ENCODE measurements at regions of chr16 and their contacts with region 1.

Region 1: DNA sequence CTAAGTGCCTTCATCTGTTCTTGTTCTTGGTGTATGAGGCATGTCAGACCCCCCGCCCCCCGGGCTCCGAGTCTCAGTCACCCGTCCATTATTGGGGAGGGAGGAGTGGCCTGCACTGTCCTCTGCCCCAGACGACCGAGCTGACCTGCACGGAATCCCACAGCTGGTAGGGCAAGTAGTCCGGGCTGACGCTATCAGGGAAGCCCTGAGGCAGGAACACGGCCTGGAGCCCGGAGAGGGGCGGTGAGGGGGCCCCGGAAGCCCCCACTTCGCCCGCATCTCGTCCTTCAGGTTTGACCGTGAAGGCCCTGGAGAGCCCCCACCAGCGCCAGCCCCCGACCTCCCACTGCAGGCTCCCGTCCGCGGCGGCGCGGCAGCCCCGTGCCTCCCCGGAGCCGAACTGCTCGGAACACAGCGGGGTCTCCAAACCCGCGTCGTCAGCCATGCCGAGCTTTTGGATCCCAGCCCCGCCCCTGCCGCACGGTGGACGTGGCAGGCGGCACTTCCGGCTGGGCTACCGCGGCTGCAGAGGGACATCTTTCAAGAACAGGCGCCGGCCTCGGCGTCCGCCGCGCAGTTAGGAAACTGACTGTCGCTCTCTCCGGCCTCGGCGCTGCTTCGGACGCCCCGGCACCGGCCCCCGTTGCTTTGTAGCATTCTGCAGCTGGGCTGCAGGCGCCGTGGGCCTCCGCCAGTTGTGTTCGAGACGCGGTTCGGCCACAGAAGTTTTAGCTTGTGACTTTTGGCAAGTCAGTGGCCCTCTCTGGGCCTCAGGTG is at the start of gene RUSF1:
- DNase-seq: peak; percentile 63 to 84 (median 77)
- ATAC-seq: peak; percentile 93
- H3K4me3 ChIP-seq: peak within 1 kb of the TSS; percentile 77
- H3K4me3 Mint-ChIP-seq: peak within 1 kb of the TSS; percentile 83 to 98 (median 92)
- H3K27ac ChIP-seq: peak within 1 kb of the TSS; percentile 93
- H3K27ac Mint-ChIP-seq: peak within 1 kb of the TSS; percentile 93 to 98 (median 97)
- H3K4me1 ChIP-seq: peaks cover 27% of the 10 kb centered on the region in 2 donors
- H3K4me1 Mint-ChIP-seq: peaks cover 30 to 66% (median 53%) of the 10 kb centered on the region in 7 donors
- H3K27me3 ChIP-seq: no peaks in the 10 kb centered on the region
- H3K27me3 Mint-ChIP-seq: no peaks in the 10 kb centered on the region
- total RNA-seq, gene RUSF1: 47.3 to 118 (median 89.5) TPM

Region 2: DNA sequence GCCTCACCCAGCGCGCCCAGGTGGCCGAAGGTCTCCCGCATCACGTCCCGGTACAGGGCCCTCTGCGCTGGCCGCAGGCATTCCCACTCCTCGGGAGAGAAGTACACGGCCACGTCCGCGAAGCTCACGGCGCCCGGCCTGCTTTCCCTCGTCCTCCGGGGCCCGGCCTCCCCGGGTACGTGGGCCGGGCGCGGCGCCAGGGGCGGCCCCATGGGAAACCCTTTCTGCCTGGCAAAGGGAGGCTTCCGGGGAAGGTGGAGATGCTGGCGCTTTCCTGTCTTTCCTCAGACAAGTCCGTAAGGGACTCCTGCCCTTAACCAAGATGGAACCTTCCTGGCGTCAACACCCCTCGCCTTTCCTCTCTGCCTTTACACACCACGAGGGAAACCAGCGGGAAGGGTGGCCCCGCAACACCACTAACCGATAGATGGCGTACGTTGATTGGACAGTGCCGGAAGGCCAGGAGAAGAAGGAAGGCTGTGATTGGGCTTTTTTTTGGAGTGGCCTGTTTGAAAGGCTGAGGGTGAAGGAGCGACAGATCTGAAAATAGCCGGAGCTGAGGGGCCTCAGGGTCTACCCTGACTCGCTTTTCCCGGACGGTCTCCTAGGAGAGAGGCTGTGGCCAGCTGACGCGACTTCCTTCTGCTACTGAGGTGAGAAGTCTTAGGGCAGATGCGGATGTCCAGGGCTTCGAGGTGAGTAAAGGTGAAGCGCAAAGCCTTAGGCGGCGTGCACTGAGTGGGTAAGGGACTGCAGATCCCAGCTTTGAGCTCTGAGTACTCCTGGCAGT is 922.5 kb before region 1 on chr16 and contains the start of gene ZNF785:
- CTCF ChIA-PET with region 1: no interaction called
- POLR2A ChIA-PET with region 1: no interaction called
- intact Hi-C with region 1: no loop called
- DNase-seq: peak; percentile 72 to 95 (median 93)
- ATAC-seq: peak; percentile 100
- H3K4me3 ChIP-seq: peak within 1 kb of the TSS; percentile 77
- H3K4me3 Mint-ChIP-seq: peak within 1 kb of the TSS; percentile 85 to 98 (median 94)
- H3K27ac ChIP-seq: peak within 1 kb of the TSS; percentile 81
- H3K27ac Mint-ChIP-seq: peak within 1 kb of the TSS; percentile 89 to 95 (median 92)
- H3K4me1 ChIP-seq: peaks cover 8 to 12% of the 10 kb centered on the region in 2 donors
- H3K4me1 Mint-ChIP-seq: peaks cover 6 to 44% (median 32%) of the 10 kb centered on the region in 7 donors
- H3K27me3 ChIP-seq: no peaks in the 10 kb centered on the region
- H3K27me3 Mint-ChIP-seq: peaks cover 0 to 2% (median 0%) of the 10 kb centered on the region in 5 donors
- total RNA-seq, gene ZNF785: 10.2 to 37.1 (median 21.4) TPM

Region 3: GRCh38 chr16:31117391-31118197 is 390.5 kb before region 1 on chr16 and contains the start of gene KAT8:
- CTCF ChIA-PET with region 1: no interaction called
- POLR2A ChIA-PET with region 1: no interaction called
- intact Hi-C with region 1: loop called in 1 of 2 experiments (anchors 1 kb)
- DNase-seq: peak; percentile 88 to 99 (median 97)
- ATAC-seq: peak; percentile 95
- H3K4me3 ChIP-seq: peak within 1 kb of the TSS; percentile 65
- H3K4me3 Mint-ChIP-seq: peak within 1 kb of the TSS; percentile 86 to 95 (median 90)
- H3K27ac ChIP-seq: peak within 1 kb of the TSS; percentile 98
- H3K27ac Mint-ChIP-seq: peak within 1 kb of the TSS; percentile 77 to 96 (median 89)
- H3K4me1 ChIP-seq: peaks cover 7 to 15% of the 10 kb centered on the region in 2 donors
- H3K4me1 Mint-ChIP-seq: peaks cover 12 to 32% (median 24%) of the 10 kb centered on the region in 7 donors
- H3K27me3 ChIP-seq: no peaks in the 10 kb centered on the region
- H3K27me3 Mint-ChIP-seq: no peaks in the 10 kb centered on the region
- total RNA-seq, gene KAT8: 63.0 to 134 (median 112) TPM

Region 4: GRCh38 chr16:31472709-31473203 is 35.4 kb before region 1 on chr16:
- CTCF ChIA-PET with region 1: no interaction called
- POLR2A ChIA-PET with region 1: interaction called, 14 read pairs
- intact Hi-C with region 1: loop called in 1 of 2 experiments (anchors 1 kb)
- DNase-seq: peak in 1 of 9 donors; percentile 36
- ATAC-seq: peak; percentile 33
- H3K4me3 ChIP-seq: no peak overlapping the region
- H3K4me3 Mint-ChIP-seq: peak overlapping the region; percentile 60 to 84 (median 79)
- H3K27ac ChIP-seq: no peak overlapping the region
- H3K27ac Mint-ChIP-seq: peak overlapping the region in 1 of 9 donors; percentile 64
- H3K4me1 ChIP-seq: peaks cover 4 to 6% of the 10 kb centered on the region in 2 donors
- H3K4me1 Mint-ChIP-seq: peaks cover 8 to 29% (median 21%) of the 10 kb centered on the region in 7 donors
- H3K27me3 ChIP-seq: no peaks in the 10 kb centered on the region
- H3K27me3 Mint-ChIP-seq: peaks cover 0 to 52% (median 14%) of the 10 kb centered on the region in 5 donors

Region 5: DNA sequence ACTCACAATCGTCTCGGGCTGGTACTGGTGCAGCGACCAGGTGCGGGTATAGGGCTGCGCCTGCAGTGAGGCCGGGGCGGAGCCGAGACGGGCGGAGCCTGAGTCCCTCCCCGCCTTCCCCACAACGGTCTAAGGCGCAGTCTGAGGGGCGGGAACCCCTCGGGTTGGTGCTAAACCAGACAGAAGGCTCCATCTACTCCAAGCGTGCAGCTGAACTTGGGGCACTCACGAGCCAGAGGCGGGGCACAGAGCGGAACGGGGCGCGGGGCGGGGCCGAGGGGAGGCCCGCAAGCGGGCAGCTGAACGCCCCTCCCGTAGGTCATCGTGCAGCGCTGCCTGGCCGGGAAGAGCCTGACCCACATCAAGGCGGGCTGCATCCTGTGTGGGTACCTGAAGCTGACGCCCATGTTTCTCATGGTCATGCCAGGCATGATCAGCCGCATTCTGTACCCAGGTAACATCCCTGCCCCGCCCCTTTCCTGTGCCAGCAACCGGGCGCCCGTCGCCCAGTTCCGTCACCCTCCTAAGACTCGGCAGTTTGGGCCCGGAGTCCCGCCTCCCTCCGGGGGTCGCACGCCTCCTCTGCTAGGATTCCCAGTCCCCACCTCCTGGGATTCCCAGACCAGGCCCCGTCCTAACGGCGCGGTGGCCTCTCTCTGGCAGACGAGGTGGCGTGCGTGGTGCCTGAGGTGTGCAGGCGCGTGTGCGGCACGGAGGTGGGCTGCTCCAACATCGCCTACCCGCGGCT is 20.2 kb before region 1 on chr16:
- CTCF ChIA-PET with region 1: no interaction called
- POLR2A ChIA-PET with region 1: interaction called, 15 read pairs
- intact Hi-C with region 1: loop called (anchors 1 to 2 kb)
- DNase-seq: peak; percentile 55 to 79 (median 74)
- ATAC-seq: peak; percentile 92
- H3K4me3 ChIP-seq: peak overlapping the region; percentile 89
- H3K4me3 Mint-ChIP-seq: peak overlapping the region; percentile 89 to 95 (median 92)
- H3K27ac ChIP-seq: peak overlapping the region; percentile 62
- H3K27ac Mint-ChIP-seq: peak overlapping the region in 8 of 9 donors; percentile 51 to 90 (median 84)
- H3K4me1 ChIP-seq: no peaks in the 10 kb centered on the region
- H3K4me1 Mint-ChIP-seq: peaks cover 5 to 24% (median 13%) of the 10 kb centered on the region in 7 donors
- H3K27me3 ChIP-seq: no peaks in the 10 kb centered on the region
- H3K27me3 Mint-ChIP-seq: peaks cover 0 to 17% (median 0%) of the 10 kb centered on the region in 5 donors

Region 6: DNA sequence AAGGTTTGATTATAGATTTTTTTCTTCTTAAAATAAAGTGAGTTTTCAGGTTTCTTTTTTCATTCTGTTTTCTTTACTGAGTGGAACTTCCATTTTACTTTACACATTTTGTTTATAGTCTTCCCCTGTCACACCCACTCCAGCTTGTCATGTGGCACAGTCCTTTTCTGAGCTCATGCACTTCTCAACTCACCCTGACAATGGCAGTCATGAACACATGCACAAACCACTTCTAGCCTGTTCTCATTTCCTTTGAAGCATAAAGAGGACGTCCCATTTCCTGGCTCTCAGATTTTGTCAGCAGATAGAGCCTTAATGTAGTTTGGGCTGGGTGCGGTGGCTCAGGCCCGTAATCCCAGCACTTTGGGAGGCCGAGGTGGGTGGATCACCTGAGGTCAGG is 187.6 kb after region 1 on chr16:
- CTCF ChIA-PET with region 1: no interaction called
- POLR2A ChIA-PET with region 1: no interaction called
- intact Hi-C with region 1: loop called (anchors 1 to 2 kb)
- DNase-seq: peak in 7 of 9 donors; percentile 73 to 91 (median 84)
- ATAC-seq: peak; percentile 92
- H3K4me3 ChIP-seq: no peak overlapping the region
- H3K4me3 Mint-ChIP-seq: no peak overlapping the region
- H3K27ac ChIP-seq: no peak overlapping the region
- H3K27ac Mint-ChIP-seq: no peak overlapping the region
- H3K4me1 ChIP-seq: peaks cover 14 to 25% of the 10 kb centered on the region in 2 donors
- H3K4me1 Mint-ChIP-seq: peaks cover 0 to 18% (median 15%) of the 10 kb centered on the region in 7 donors
- H3K27me3 ChIP-seq: no peaks in the 10 kb centered on the region
- H3K27me3 Mint-ChIP-seq: peaks cover 0 to 26% (median 0%) of the 10 kb centered on the region in 5 donors

Region 7: GRCh38 chr16:31700526-31701388 is 192.6 kb after region 1 on chr16:
- CTCF ChIA-PET with region 1: no interaction called
- POLR2A ChIA-PET with region 1: interaction called, 4 read pairs
- intact Hi-C with region 1: loop called (anchors 1 to 2 kb)
- DNase-seq: peak; percentile 67 to 86 (median 81)
- ATAC-seq: peak; percentile 84
- H3K4me3 ChIP-seq: peak overlapping the region; percentile 95
- H3K4me3 Mint-ChIP-seq: peak overlapping the region; percentile 87 to 95 (median 91)
- H3K27ac ChIP-seq: peak overlapping the region; percentile 90
- H3K27ac Mint-ChIP-seq: peak overlapping the region; percentile 86 to 97 (median 93)
- H3K4me1 ChIP-seq: peaks cover 19 to 28% of the 10 kb centered on the region in 2 donors
- H3K4me1 Mint-ChIP-seq: peaks cover 20 to 39% (median 37%) of the 10 kb centered on the region in 7 donors
- H3K27me3 ChIP-seq: no peaks in the 10 kb centered on the region
- H3K27me3 Mint-ChIP-seq: peaks cover 0 to 24% (median 0%) of the 10 kb centered on the region in 5 donors

Region 8: GRCh38 chr16:31713071-31713944 is 205.2 kb after region 1 on chr16:
- CTCF ChIA-PET with region 1: no interaction called
- POLR2A ChIA-PET with region 1: interaction called, 13 read pairs
- intact Hi-C with region 1: loop called in 1 of 2 experiments (anchors 1 kb)
- DNase-seq: peak; percentile 74 to 91 (median 87)
- ATAC-seq: peak; percentile 88
- H3K4me3 ChIP-seq: peak overlapping the region; percentile 98
- H3K4me3 Mint-ChIP-seq: peak overlapping the region; percentile 78 to 100 (median 99)
- H3K27ac ChIP-seq: peak overlapping the region; percentile 88
- H3K27ac Mint-ChIP-seq: peak overlapping the region; percentile 97 to 100 (median 98)
- H3K4me1 ChIP-seq: peaks cover 15 to 34% of the 10 kb centered on the region in 2 donors
- H3K4me1 Mint-ChIP-seq: peaks cover 34 to 68% (median 62%) of the 10 kb centered on the region in 7 donors
- H3K27me3 ChIP-seq: no peaks in the 10 kb centered on the region
- H3K27me3 Mint-ChIP-seq: no peaks in the 10 kb centered on the region